Pancreas (tissue), 10 donors: ENCODE measurements at regions of chr2 and their contacts with region 1.

Region 1: DNA sequence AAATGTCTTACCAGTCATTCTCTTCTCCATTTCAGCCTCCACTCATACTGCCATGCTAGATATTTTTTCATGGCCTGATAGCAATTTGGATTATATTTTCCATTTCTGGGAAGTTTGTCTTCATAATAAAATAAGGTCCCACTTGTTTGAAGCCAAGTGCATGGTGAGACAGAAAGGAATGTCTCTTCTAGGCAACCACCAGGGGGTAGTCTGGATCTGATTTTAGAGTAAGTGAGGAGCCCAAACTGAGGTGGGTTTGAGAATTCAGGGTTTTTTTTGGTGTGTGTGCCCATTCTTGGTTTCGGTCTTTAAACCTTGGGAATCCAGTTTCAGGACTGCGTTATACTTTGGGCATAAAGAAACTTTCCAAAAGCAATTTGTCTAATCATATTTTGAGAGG is 315.5 kb downstream of the RPRM start:
- DNase-seq: peak in 3 of 6 donors; percentile 10 to 18 (median 18)
- ATAC-seq: peak in 3 of 4 donors; percentile 52 to 56 (median 56)
- H3K4me3 ChIP-seq: no peak overlapping the region
- H3K27ac ChIP-seq: no peak overlapping the region
- H3K4me1 ChIP-seq: no peaks in the 10 kb centered on the region
- H3K27me3 ChIP-seq: no peaks in the 10 kb centered on the region
- CTCF ChIP-seq: peak in 3 of 4 donors; percentile 18 to 46 (median 36)

Region 2: DNA sequence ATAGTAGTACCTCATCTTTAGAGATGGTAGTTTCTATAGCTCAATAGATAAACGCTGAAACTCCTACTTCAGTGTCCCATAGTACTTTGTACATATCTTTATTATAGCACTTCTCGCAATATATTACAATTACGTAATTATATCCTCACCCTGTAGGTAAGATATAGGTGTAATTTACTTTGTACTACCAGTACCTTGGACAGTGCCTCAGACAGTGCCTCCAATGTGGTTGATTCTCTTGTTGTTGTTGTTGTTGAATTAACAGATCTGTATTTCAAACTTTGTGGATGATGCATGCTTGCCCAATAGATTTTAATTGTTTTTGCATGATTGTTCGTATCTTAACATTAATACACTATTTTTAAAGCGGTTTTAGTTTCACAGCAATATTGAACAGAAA is 256.0 kb before region 1 on chr2:
- intact Hi-C with region 1: no loop called
- DNase-seq: no peak
- ATAC-seq: no peak
- H3K4me3 ChIP-seq: no peak overlapping the region
- H3K27ac ChIP-seq: no peak overlapping the region
- H3K4me1 ChIP-seq: no peaks in the 10 kb centered on the region
- H3K27me3 ChIP-seq: no peaks in the 10 kb centered on the region
- CTCF ChIP-seq: no peak

Region 3: DNA sequence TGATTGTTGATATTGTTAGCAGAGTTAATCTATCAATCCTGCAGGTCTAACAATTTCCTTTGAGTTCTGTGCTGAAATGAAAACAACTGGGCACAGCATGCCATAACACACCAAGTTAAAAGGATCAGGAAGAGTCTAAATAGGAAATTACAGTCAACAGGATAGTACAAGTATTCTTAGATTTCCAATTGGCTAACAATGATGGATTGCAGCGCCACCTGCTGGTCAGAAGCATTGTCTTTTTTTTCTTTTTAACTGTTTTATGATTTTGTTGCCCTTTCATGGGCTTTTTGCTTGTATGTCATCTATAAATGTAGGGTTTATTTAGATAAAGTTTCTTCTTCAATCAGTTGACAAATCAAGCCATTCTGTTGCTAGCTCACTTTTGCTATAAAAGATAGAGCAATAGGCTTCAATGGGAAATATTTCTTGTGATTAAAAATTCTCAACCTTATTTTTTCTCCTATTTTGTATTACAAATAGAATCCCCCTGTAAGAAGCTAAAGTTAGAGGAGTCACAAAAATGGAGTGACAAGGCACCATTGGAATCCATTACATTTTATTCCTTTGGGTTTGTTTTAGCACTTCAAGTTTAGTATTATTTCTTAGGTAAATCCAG is 356.3 kb after region 1 on chr2:
- intact Hi-C with region 1: loop called in 1 of 3 experiments (anchors 10 kb)
- DNase-seq: peak in 4 of 6 donors; percentile 25 to 84 (median 52)
- ATAC-seq: peak in 3 of 4 donors; percentile 60 to 66 (median 66)
- H3K4me3 ChIP-seq: no peak overlapping the region
- H3K27ac ChIP-seq: no peak overlapping the region
- H3K4me1 ChIP-seq: peaks cover 0 to 3% (median 0%) of the 10 kb centered on the region in 3 donors
- H3K27me3 ChIP-seq: no peaks in the 10 kb centered on the region
- CTCF ChIP-seq: peak; percentile 24 to 80 (median 66)